Prostate gland (tissue), 2 donors: ENCODE measurements at regions of chr3 and their contacts with region 1.

Region 1: GRCh38 chr3:122794982-122795882 is at the start of gene SLC49A4:
- DNase-seq: peak; percentile 40
- H3K4me3 ChIP-seq: peak within 1 kb of the TSS; percentile 83 to 90
- H3K27ac ChIP-seq: peak within 1 kb of the TSS; percentile 95 to 96
- H3K4me1 ChIP-seq: no peaks in the 10 kb centered on the region
- H3K27me3 ChIP-seq: no peaks in the 10 kb centered on the region
- CTCF ChIP-seq: no peak
- POLR2A ChIP-seq: peak; percentile 93
- total RNA-seq, gene SLC49A4: 26.7 to 34.7 TPM

Region 2: GRCh38 chr3:122564155-122564912 is 230.9 kb before region 1 on chr3 and contains the starts of genes DTX3L and PARP9:
- intact Hi-C with region 1: loop called (anchors 5 kb)
- DNase-seq: peak; percentile 81
- H3K4me3 ChIP-seq: peak within 1 kb of the TSS; percentile 76 to 78
- H3K27ac ChIP-seq: peak within 1 kb of the TSS; percentile 96
- H3K4me1 ChIP-seq: peaks cover 7% of the 10 kb centered on the region
- H3K27me3 ChIP-seq: no peaks in the 10 kb centered on the region
- CTCF ChIP-seq: no peak
- POLR2A ChIP-seq: peak; percentile 82
- total RNA-seq, gene DTX3L: 22.8 to 46.3 TPM
- total RNA-seq, gene PARP9: 30.4 to 41.7 TPM